ENCODE measurements at regions of chr2 and their contacts with region 1.

Region 1: GRCh38 chr2:3443506-3444073 is 64.1 kb downstream of the TRAPPC12 start:
- DNase-seq: no peak
- H3K4me3 ChIP-seq: no peak overlapping the region
- H3K27ac ChIP-seq: no peak overlapping the region
- H3K27me3 ChIP-seq: no peaks in the 10 kb centered on the region
- CTCF ChIP-seq: no peak

Region 2: GRCh38 chr2:3461801-3462492 is 18.4 kb after region 1 on chr2:
- CTCF ChIA-PET with region 1: interaction called, 21 read pairs
- POLR2A ChIA-PET with region 1: no interaction called
- DNase-seq: peak; percentile 20
- H3K4me3 ChIP-seq: no peak overlapping the region
- H3K27ac ChIP-seq: no peak overlapping the region
- H3K27me3 ChIP-seq: no peaks in the 10 kb centered on the region
- CTCF ChIP-seq: peak; percentile 81

Region 3: GRCh38 chr2:3981446-3981987 is 537.9 kb after region 1 on chr2:
- CTCF ChIA-PET with region 1: no interaction called
- POLR2A ChIA-PET with region 1: no interaction called
- DNase-seq: no peak
- H3K4me3 ChIP-seq: no peak overlapping the region
- H3K27ac ChIP-seq: no peak overlapping the region
- H3K27me3 ChIP-seq: no peaks in the 10 kb centered on the region
- CTCF ChIP-seq: no peak

Measured in AG04450 (cell line).